RWPE1 (cell line): ENCODE measurements at regions of chr19 and their contacts with region 1.

Region 1: DNA sequence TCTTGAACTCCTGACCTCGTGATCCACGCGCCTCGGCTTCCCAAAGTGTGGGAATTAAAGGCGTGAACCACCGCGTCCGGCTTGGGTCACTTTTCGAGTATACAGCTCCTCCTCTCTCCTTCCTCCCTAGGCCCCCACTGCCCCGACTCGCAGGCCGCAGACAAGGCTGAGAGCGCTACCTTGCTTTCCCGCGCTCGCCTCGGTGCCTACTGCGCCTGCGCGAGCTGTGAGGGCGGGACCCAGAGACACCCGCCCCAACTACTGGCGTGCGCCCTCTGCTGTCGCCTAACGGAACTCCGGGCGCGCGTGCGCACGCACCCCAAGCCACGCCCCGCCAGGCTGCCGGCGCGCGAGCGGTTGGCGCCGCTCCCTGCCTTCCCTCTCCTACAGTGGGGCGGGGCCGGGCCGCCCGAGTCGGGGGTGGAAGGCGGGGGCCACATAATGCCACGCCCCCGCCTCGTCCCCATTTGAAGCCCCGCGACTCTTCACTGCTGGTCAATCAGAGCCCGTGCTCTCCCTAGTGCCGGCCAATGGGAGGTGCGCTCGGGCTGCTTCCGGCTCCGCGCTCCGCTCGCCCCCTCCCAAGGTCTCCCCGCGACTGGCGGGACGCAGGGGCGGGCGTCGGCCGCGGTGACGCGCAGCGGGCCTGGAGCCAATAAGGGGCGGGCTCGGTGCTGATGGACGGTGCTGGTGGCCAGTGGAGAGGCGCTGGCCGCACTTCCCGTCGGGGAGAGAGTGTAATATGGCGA is at the start of gene RAB8A:
- DNase-seq: peak; percentile 99
- H3K27ac ChIP-seq: peak within 1 kb of the TSS; percentile 84
- CTCF ChIP-seq: peak; percentile 99

Region 2: GRCh38 chr19:16041299-16041990 is 69.9 kb before region 1 on chr19:
- CTCF ChIA-PET with region 1: interaction called, 24 read pairs
- POLR2A ChIA-PET with region 1: no interaction called
- DNase-seq: peak; percentile 92
- H3K27ac ChIP-seq: 0 out of 2 replicates have a peak overlapping the region, but pooled peaks have one; percentile 23
- CTCF ChIP-seq: peak; percentile 99